ENCODE measurements at regions of chr18 and their contacts with region 1.

Region 1: DNA sequence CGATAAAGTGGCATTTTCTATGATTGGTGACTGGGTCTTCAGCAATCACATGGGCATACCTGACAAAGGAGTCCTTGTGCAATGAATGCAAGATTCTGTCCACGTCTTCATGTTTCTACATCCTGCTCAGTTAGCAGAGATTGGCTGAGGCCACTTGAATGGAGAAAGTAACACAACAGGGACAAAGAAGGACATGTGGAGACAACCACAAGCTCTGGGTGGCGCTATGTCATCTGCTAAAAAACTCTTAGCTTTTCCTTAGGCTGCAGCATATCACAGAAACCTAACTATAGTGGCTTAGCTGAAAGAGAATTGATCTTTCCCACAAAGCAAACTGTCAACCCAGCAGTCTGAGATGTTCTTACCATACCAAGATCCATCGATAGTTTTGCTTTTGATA is 1109.7 kb downstream of the SOCS6 start:
- DNase-seq: no peak
- CTCF ChIP-seq: no peak

Region 2: GRCh38 chr18:71352618-71353017 is 45.9 kb before region 1 on chr18:
- CTCF ChIA-PET with region 1: no interaction called
- POLR2A ChIA-PET with region 1: no interaction called
- DNase-seq: no peak
- CTCF ChIP-seq: no peak

Region 3: DNA sequence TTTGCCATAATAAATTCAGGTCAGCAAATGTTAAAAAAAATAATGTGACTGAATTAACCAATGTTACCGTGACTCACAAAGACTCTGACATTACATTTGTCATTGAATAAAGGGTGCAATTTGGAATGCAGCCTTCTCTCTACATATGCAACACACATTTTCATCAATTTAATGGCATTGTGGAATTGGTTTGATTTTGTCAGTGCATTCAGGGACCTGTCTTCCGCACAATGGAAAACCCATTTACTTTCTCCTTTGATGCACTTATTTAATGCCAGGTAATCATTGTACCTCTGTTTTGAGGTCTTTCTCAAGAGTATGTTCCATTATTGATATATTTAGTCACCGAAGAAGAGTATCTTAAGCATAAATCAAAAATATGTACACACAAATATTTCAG is 10.4 kb before region 1 on chr18:
- CTCF ChIA-PET with region 1: interaction called, 12 read pairs
- POLR2A ChIA-PET with region 1: no interaction called
- DNase-seq: no peak
- CTCF ChIP-seq: no peak